ENCODE measurements at regions of chr16 and their contacts with region 1.

Region 1: DNA sequence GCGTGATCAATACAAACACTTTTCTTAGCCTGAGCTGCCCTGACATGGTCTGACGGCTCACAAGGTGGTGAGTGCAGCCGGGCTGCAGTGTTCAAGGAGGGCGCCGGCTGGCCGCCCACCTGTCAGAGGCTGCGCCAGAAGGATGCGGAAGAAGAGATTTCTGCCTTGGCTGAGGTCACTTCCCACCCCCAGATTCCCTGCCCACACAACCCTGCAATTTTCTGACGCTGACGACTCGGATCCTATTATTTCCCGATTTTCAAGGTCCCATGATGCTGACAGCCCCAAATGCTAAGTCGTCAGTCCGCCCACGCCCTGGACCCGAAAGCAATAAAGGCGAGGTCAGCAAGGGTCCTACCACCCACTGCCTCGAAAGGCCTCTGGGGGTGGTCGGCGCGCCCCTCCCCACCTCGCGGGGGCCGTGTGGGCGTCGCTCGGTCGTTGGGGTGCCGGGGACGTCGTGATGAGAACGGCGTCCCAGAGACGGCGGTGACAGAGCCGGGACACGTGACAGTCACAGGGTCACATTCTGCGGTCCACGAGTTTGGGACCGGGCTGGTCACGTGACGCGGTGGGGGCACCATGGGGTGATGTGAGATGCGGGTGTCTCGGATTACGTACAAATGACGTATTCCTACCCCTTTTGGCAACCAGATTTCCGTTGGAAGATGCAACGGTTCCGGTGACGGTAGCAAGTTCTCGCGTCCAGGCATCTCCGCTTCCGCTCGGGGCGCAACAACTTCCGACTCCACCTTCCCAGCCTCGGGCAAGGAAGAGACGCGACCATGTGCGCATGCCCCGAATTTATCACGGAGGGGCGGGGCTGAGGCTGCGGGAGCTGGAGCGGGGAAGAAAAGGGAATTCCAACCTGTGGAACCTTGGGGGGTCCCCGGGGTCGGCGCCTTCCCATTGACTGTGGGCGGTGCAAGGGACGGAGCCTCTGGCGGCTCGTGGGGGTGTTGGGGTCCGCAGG is at the start of gene STX4:
- DNase-seq: peak; percentile 90 to 100 (median 97)
- ATAC-seq: peak; percentile 89
- H3K4me3 ChIP-seq: peak within 1 kb of the TSS; percentile 82
- H3K4me3 Mint-ChIP-seq: peak within 1 kb of the TSS; percentile 78 to 100 (median 96)
- H3K27ac ChIP-seq: peak within 1 kb of the TSS; percentile 93
- H3K27ac Mint-ChIP-seq: peak within 1 kb of the TSS; percentile 84 to 99 (median 97)
- H3K4me1 ChIP-seq: peaks cover 14 to 16% of the 10 kb centered on the region in 2 donors
- H3K4me1 Mint-ChIP-seq: peaks cover 15 to 35% (median 22%) of the 10 kb centered on the region in 7 donors
- H3K27me3 ChIP-seq: no peaks in the 10 kb centered on the region
- H3K27me3 Mint-ChIP-seq: peaks cover 0 to 3% (median 0%) of the 10 kb centered on the region in 5 donors
- total RNA-seq, gene STX4: 77.9 to 114 (median 100) TPM

Region 2: DNA sequence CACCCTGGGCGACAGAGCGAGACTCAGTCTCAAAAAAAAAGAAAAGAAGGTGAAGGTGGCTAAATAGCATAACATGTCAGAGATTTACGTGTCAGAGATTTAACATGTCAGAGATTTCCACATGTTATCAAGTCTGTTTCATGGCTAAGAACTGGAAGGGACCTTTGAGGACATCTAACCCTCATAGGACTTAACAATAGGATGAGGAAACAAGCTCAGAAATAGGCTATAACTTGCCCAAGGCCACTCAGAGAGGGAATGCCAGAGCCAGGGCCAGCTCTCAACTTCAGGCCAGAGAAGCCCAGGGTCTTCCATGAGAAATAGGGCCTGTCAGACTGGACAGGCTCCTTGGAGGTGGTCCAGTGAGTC is 219.2 kb before region 1 on chr16:
- CTCF ChIA-PET with region 1: no interaction called
- POLR2A ChIA-PET with region 1: no interaction called
- intact Hi-C with region 1: loop called in 1 of 2 experiments (anchors 1 kb)
- DNase-seq: no peak
- ATAC-seq: no peak
- H3K4me3 ChIP-seq: peak overlapping the region; percentile 70
- H3K4me3 Mint-ChIP-seq: peak overlapping the region; percentile 84 to 92 (median 86)
- H3K27ac ChIP-seq: peak overlapping the region; percentile 73
- H3K27ac Mint-ChIP-seq: peak overlapping the region; percentile 61 to 98 (median 88)
- H3K4me1 ChIP-seq: peaks cover 7% of the 10 kb centered on the region in 2 donors
- H3K4me1 Mint-ChIP-seq: peaks cover 5 to 15% (median 13%) of the 10 kb centered on the region in 7 donors
- H3K27me3 ChIP-seq: no peaks in the 10 kb centered on the region
- H3K27me3 Mint-ChIP-seq: peaks cover 0 to 3% (median 0%) of the 10 kb centered on the region in 5 donors

Region 3: DNA sequence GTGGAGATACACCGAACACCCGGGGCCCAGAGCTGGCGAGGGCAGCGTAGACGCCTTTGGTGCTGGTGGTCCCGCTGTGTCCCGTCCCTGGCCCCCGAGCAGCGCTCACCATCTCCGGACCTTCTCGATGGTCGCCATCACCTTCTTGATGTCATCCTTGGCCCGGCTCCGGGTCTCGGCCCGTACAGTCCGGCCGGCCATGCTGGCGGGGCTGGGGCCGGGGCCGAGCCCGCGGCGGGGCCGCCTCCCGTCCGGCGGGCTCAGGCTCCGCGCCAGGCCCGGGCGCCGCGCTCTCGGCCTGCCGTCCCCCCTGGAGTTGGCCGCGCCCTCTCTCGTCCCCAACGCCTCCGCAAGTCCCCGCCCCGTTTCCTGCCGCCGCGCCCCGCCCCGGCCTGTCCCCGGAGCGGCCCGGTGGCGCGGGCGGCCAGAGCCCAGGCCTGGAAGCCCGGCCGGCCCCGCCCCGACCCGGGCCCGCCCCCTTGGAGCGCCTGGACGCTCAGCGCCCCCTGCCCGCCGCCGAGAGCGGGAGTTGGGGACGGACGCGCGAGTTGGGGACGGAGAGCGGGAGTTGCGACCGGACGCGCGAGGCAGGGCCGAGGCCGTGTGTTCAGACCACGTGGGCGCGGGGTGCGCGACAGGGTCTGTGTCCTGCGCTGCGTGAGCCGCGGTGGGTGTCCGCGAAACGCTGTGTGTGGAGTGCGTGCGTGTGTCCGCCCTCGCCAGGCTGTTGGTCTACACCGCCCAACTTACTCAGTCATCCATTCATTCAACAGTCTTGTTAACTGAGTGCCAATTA is 139.1 kb before region 1 on chr16 and contains the start of gene BCL7C:
- CTCF ChIA-PET with region 1: no interaction called
- POLR2A ChIA-PET with region 1: interaction called, 3 read pairs
- intact Hi-C with region 1: loop called in 1 of 2 experiments (anchors 1 kb)
- DNase-seq: peak; percentile 48 to 96 (median 61)
- ATAC-seq: peak; percentile 85
- H3K4me3 ChIP-seq: peak within 1 kb of the TSS; percentile 82
- H3K4me3 Mint-ChIP-seq: peak within 1 kb of the TSS; percentile 84 to 96 (median 90)
- H3K27ac ChIP-seq: peak within 1 kb of the TSS; percentile 82
- H3K27ac Mint-ChIP-seq: peak within 1 kb of the TSS; percentile 80 to 94 (median 91)
- H3K4me1 ChIP-seq: peaks cover 25 to 34% of the 10 kb centered on the region in 2 donors
- H3K4me1 Mint-ChIP-seq: peaks cover 26 to 60% (median 48%) of the 10 kb centered on the region in 7 donors
- H3K27me3 ChIP-seq: no peaks in the 10 kb centered on the region
- H3K27me3 Mint-ChIP-seq: no peaks in the 10 kb centered on the region
- total RNA-seq, gene BCL7C: 17.2 to 23.7 (median 22.7) TPM

Region 4: GRCh38 chr16:30997000-30997886 is 35.8 kb before region 1 on chr16:
- CTCF ChIA-PET with region 1: no interaction called
- POLR2A ChIA-PET with region 1: interaction called, 3 read pairs
- intact Hi-C with region 1: loop called (anchors 1 kb)
- DNase-seq: peak; percentile 45 to 80 (median 66)
- ATAC-seq: peak; percentile 99
- H3K4me3 ChIP-seq: peak overlapping the region; percentile 78
- H3K4me3 Mint-ChIP-seq: peak overlapping the region; percentile 66 to 90 (median 82)
- H3K27ac ChIP-seq: peak overlapping the region; percentile 61
- H3K27ac Mint-ChIP-seq: peak overlapping the region in 7 of 9 donors; percentile 58 to 87 (median 74)
- H3K4me1 ChIP-seq: peaks cover 5 to 11% of the 10 kb centered on the region in 2 donors
- H3K4me1 Mint-ChIP-seq: peaks cover 0 to 9% (median 6%) of the 10 kb centered on the region in 7 donors
- H3K27me3 ChIP-seq: no peaks in the 10 kb centered on the region
- H3K27me3 Mint-ChIP-seq: peaks cover 0 to 3% (median 0%) of the 10 kb centered on the region in 5 donors

Region 5: DNA sequence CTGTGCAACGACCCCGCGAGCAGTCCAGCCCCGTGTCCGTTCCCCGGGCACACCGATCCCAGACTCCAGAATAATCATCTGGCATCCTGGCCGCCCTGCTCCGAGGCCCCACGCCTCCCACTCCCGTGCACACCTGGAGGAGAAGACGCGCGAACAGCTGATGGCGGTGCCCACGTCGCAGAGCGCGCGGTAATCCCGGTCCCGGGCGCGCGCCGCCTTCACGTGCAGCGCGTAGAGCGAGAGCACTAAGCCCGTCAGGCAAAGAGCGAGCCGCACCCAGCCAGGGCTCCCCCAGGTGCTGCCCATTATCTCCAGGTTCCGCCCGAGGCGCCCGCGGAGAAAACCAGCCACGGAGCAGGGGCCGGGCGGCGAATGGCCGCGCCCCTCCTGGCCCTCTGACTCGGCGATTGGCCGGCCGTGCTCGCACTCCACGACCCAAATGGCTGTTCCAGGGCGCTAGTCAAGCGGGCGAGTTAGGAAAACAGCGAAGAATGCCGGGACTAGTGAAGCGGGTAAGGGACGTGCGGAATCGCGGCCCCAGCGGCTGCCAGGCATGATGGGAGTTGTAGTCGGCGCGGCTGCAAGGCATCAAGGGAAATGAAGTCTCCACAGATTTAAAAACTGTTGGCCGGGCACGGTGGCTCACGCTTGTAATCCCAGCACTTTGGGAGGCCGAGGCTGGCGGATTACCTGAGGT is 61.5 kb after region 1 on chr16 and contains the start of gene VKORC1:
- CTCF ChIA-PET with region 1: interaction called, 3 read pairs
- POLR2A ChIA-PET with region 1: interaction called, 3 read pairs
- intact Hi-C with region 1: loop called (anchors 1 kb)
- DNase-seq: peak; percentile 66 to 89 (median 88)
- ATAC-seq: peak; percentile 93
- H3K4me3 ChIP-seq: peak within 1 kb of the TSS; percentile 99
- H3K4me3 Mint-ChIP-seq: peak within 1 kb of the TSS; percentile 92 to 99 (median 94)
- H3K27ac ChIP-seq: peak within 1 kb of the TSS; percentile 85
- H3K27ac Mint-ChIP-seq: peak within 1 kb of the TSS; percentile 67 to 95 (median 91)
- H3K4me1 ChIP-seq: peaks cover 14 to 18% of the 10 kb centered on the region in 2 donors
- H3K4me1 Mint-ChIP-seq: peaks cover 14 to 42% (median 29%) of the 10 kb centered on the region in 7 donors
- H3K27me3 ChIP-seq: no peaks in the 10 kb centered on the region
- H3K27me3 Mint-ChIP-seq: no peaks in the 10 kb centered on the region
- total RNA-seq, gene VKORC1: 29.5 to 69.3 (median 35.6) TPM

Region 6: GRCh38 chr16:31142109-31143010 is 109.3 kb after region 1 on chr16:
- CTCF ChIA-PET with region 1: no interaction called
- POLR2A ChIA-PET with region 1: interaction called, 5 read pairs
- intact Hi-C with region 1: loop called (anchors 1 kb)
- DNase-seq: peak; percentile 91 to 98 (median 95)
- ATAC-seq: peak; percentile 95
- H3K4me3 ChIP-seq: peak overlapping the region; percentile 68
- H3K4me3 Mint-ChIP-seq: peak overlapping the region; percentile 61 to 84 (median 72)
- H3K27ac ChIP-seq: peak overlapping the region; percentile 74
- H3K27ac Mint-ChIP-seq: peak overlapping the region; percentile 73 to 94 (median 84)
- H3K4me1 ChIP-seq: peaks cover 6 to 14% of the 10 kb centered on the region in 2 donors
- H3K4me1 Mint-ChIP-seq: peaks cover 0 to 17% (median 14%) of the 10 kb centered on the region in 7 donors
- H3K27me3 ChIP-seq: no peaks in the 10 kb centered on the region
- H3K27me3 Mint-ChIP-seq: peaks cover 0 to 3% (median 0%) of the 10 kb centered on the region in 5 donors

Region 7: GRCh38 chr16:31253642-31254045 is 220.6 kb after region 1 on chr16:
- CTCF ChIA-PET with region 1: no interaction called
- POLR2A ChIA-PET with region 1: no interaction called
- intact Hi-C with region 1: no loop called
- DNase-seq: peak in 2 of 9 donors; percentile 8 to 48
- ATAC-seq: peak; percentile 89
- H3K4me3 ChIP-seq: no peak overlapping the region
- H3K4me3 Mint-ChIP-seq: peak overlapping the region in 1 of 10 donors; percentile 84
- H3K27ac ChIP-seq: no peak overlapping the region
- H3K27ac Mint-ChIP-seq: peak overlapping the region in 3 of 9 donors; percentile 2 to 92 (median 5)
- H3K4me1 ChIP-seq: no peaks in the 10 kb centered on the region
- H3K4me1 Mint-ChIP-seq: peaks cover 0 to 57% (median 8%) of the 10 kb centered on the region in 7 donors
- H3K27me3 ChIP-seq: no peaks in the 10 kb centered on the region
- H3K27me3 Mint-ChIP-seq: no peaks in the 10 kb centered on the region

Region 8: GRCh38 chr16:31333686-31334649 is 300.9 kb after region 1 on chr16:
- CTCF ChIA-PET with region 1: no interaction called
- POLR2A ChIA-PET with region 1: no interaction called
- intact Hi-C with region 1: loop called in 1 of 2 experiments (anchors 5 kb)
- DNase-seq: peak in 5 of 9 donors; percentile 25 to 47 (median 34)
- ATAC-seq: peak; percentile 87
- H3K4me3 ChIP-seq: no peak overlapping the region
- H3K4me3 Mint-ChIP-seq: peak overlapping the region in 1 of 10 donors; percentile 34
- H3K27ac ChIP-seq: peak overlapping the region; percentile 1
- H3K27ac Mint-ChIP-seq: peak overlapping the region in 7 of 9 donors; percentile 26 to 95 (median 48)
- H3K4me1 ChIP-seq: peaks cover 0 to 3% of the 10 kb centered on the region in 2 donors
- H3K4me1 Mint-ChIP-seq: peaks cover 16 to 48% (median 28%) of the 10 kb centered on the region in 7 donors
- H3K27me3 ChIP-seq: no peaks in the 10 kb centered on the region
- H3K27me3 Mint-ChIP-seq: peaks cover 0 to 17% (median 10%) of the 10 kb centered on the region in 5 donors